ENCODE measurements at regions of chr13 and their contacts with region 1.

Region 1: GRCh38 chr13:48595431-48596429 is 58.0 kb upstream of the CYSLTR2 start:
- DNase-seq: peak; percentile 75
- H3K4me3 Mint-ChIP-seq: no peak overlapping the region
- H3K27ac Mint-ChIP-seq: no peak overlapping the region
- H3K4me1 Mint-ChIP-seq: peaks cover 4% of the 10 kb centered on the region
- H3K27me3 Mint-ChIP-seq: no peaks in the 10 kb centered on the region

Region 2: DNA sequence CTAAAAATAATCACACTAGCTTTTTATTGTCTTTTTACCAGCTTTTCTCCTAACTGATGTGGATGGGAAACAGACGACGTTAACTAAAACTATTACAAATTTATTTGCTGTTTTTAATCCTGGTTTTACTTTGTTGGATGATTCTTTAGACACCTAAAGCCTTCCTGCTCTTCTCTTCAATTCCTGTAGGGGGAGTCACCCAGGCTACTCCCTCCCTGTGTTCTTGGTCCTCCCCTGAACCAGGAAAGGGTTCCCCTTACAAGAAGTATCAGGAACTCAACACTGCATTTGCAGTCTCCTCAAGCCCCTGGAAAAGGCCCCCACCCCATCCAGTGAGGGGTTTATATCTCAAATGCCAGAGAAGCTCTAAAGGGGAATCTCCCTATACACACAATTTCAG is 800.8 kb before region 1 on chr13:
- CTCF ChIA-PET with region 1: no interaction called
- intact Hi-C with region 1: loop called (anchors 10 kb)
- DNase-seq: no peak
- H3K4me3 Mint-ChIP-seq: no peak overlapping the region
- H3K27ac Mint-ChIP-seq: no peak overlapping the region
- H3K4me1 Mint-ChIP-seq: no peaks in the 10 kb centered on the region
- H3K27me3 Mint-ChIP-seq: no peaks in the 10 kb centered on the region

Region 3: DNA sequence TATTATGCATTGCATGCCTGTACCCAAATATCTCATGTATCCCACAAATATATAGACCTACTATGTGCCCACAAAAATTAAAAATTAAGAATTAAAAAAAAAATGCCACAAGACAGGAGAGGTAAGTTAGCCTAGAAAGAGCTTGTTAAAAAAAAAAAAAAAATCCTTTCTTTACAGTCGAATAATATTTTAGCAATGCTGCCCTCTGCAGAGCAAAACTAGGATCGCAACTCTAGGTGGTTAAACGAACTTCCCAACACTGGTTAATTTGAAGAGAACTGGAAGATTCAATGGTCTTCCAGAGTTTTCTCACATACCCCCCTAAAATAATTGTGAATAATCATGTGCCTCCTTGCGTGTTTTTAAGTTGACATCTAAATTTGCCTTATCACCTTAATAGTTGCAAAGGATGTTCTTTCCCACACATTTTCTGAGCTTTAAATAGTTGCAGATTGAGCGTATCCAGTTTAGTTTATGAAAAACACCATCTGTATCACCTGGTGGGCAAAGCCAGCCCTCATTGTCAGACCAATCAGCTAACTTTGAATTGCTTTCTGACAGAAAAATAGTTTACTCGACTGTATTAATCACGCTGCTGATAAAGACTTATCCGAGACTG is 15.4 kb before region 1 on chr13:
- CTCF ChIA-PET with region 1: interaction called, 10 read pairs
- intact Hi-C with region 1: no loop called
- DNase-seq: peak; percentile 88
- H3K4me3 Mint-ChIP-seq: no peak overlapping the region
- H3K27ac Mint-ChIP-seq: no peak overlapping the region
- H3K4me1 Mint-ChIP-seq: peaks cover 2% of the 10 kb centered on the region
- H3K27me3 Mint-ChIP-seq: peaks cover 6% of the 10 kb centered on the region

Region 4: GRCh38 chr13:48653472-48653939 is 57.8 kb after region 1 on chr13 and contains the start of gene CYSLTR2:
- CTCF ChIA-PET with region 1: no interaction called
- intact Hi-C with region 1: loop called (anchors 2 kb)
- DNase-seq: peak; percentile 27
- H3K4me3 Mint-ChIP-seq: peak within 1 kb of the TSS; percentile 75
- H3K27ac Mint-ChIP-seq: peak within 1 kb of the TSS; percentile 82
- H3K4me1 Mint-ChIP-seq: peaks cover 29% of the 10 kb centered on the region
- H3K27me3 Mint-ChIP-seq: no peaks in the 10 kb centered on the region
- total RNA-seq, gene CYSLTR2: 1.3 to 1.7 TPM

Region 5: DNA sequence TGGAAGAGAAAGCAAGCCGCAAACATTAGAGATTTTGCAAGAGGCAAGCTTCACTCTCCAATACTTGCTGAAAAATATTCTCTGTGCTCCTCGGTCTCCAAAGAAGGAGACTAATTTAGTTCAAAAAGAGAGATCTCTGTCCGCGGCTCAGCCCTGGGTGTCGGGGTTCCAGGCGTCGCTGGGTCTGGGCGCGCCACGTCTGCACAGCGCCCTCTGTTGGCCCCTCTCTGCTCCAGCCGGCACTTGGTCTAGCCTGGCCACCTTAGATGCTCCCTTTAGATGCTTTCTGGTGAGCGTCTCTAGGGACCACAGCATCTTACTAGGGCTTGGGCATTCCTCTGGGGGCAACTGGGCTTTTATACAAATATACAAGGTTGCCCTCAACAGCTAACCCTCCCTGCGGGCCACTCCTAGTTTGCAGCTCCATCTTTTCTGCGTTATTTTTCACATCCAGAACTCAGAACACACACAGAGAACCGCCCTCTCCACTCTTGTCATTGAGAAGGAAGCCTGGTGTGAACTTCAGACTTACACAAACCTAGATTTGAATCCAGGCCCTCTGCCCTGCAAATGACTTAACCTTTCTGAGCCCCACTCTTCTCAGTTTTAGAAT is 136.3 kb after region 1 on chr13:
- CTCF ChIA-PET with region 1: interaction called, 8 read pairs
- intact Hi-C with region 1: loop called (anchors 1 kb)
- DNase-seq: peak; percentile 65
- H3K4me3 Mint-ChIP-seq: peak overlapping the region; percentile 58
- H3K27ac Mint-ChIP-seq: no peak overlapping the region
- H3K4me1 Mint-ChIP-seq: peaks cover 19% of the 10 kb centered on the region
- H3K27me3 Mint-ChIP-seq: peaks cover 3% of the 10 kb centered on the region

Region 6: GRCh38 chr13:49278211-49278610 is 682.5 kb after region 1 on chr13:
- CTCF ChIA-PET with region 1: no interaction called
- intact Hi-C with region 1: loop called (anchors 5 kb)
- DNase-seq: no peak
- H3K4me3 Mint-ChIP-seq: no peak overlapping the region
- H3K27ac Mint-ChIP-seq: no peak overlapping the region
- H3K4me1 Mint-ChIP-seq: no peaks in the 10 kb centered on the region
- H3K27me3 Mint-ChIP-seq: no peaks in the 10 kb centered on the region

Region 7: GRCh38 chr13:49329821-49330220 is 734.1 kb after region 1 on chr13:
- CTCF ChIA-PET with region 1: no interaction called
- intact Hi-C with region 1: no loop called
- DNase-seq: no peak
- H3K4me3 Mint-ChIP-seq: no peak overlapping the region
- H3K27ac Mint-ChIP-seq: no peak overlapping the region
- H3K4me1 Mint-ChIP-seq: no peaks in the 10 kb centered on the region
- H3K27me3 Mint-ChIP-seq: no peaks in the 10 kb centered on the region

Region 8: GRCh38 chr13:49606747-49607648 is 1011.3 kb after region 1 on chr13:
- CTCF ChIA-PET with region 1: no interaction called
- intact Hi-C with region 1: loop called (anchors 5 kb)
- DNase-seq: peak; percentile 92
- H3K4me3 Mint-ChIP-seq: peak overlapping the region; percentile 75
- H3K27ac Mint-ChIP-seq: peak overlapping the region; percentile 56
- H3K4me1 Mint-ChIP-seq: peaks cover 2% of the 10 kb centered on the region
- H3K27me3 Mint-ChIP-seq: no peaks in the 10 kb centered on the region